Esophagus muscularis mucosa (tissue), 4 donors: ENCODE measurements at regions of chr9 and their contacts with region 1.

Region 1: DNA sequence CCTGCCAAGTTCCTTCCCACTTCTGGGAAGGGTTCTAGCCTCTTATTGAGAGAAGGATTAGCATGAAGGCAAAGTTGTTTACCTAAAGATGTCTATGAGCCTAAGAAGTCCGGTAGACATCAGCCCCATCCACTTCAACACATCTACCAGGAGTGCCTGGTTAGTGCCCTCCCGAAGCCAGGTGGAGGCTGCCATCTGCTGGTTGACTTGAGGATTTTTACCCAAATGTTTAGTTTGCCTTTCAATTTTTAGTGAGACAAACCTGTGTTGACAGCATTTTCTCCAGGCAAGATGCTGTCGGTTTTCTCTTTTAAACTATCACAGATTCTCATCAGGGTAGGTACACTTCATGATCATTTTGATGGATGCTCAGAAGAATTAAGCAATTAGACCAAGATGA is 83.6 kb upstream of the TNFSF8 start:
- DNase-seq: no peak
- H3K4me3 ChIP-seq: no peak overlapping the region
- H3K27ac ChIP-seq: no peak overlapping the region
- H3K4me1 ChIP-seq: peaks cover 0 to 52% (median 48%) of the 10 kb centered on the region in 4 donors
- H3K27me3 ChIP-seq: no peaks in the 10 kb centered on the region
- CTCF ChIP-seq: peak; percentile 81 to 84 (median 81)
- EP300 ChIP-seq: no peak
- POLR2A ChIP-seq: no peak

Region 2: GRCh38 chr9:114662081-114662989 is 351.7 kb before region 1 on chr9:
- intact Hi-C with region 1: loop called (anchors 5 kb)
- DNase-seq: no peak
- H3K4me3 ChIP-seq: no peak overlapping the region
- H3K27ac ChIP-seq: no peak overlapping the region
- H3K4me1 ChIP-seq: no peaks in the 10 kb centered on the region
- H3K27me3 ChIP-seq: no peaks in the 10 kb centered on the region
- CTCF ChIP-seq: peak; percentile 55 to 79 (median 64)
- EP300 ChIP-seq: no peak
- POLR2A ChIP-seq: no peak

Region 3: GRCh38 chr9:114738581-114739316 is 275.2 kb before region 1 on chr9:
- intact Hi-C with region 1: loop called (anchors 2 kb)
- DNase-seq: peak; percentile 95
- H3K4me3 ChIP-seq: no peak overlapping the region
- H3K27ac ChIP-seq: no peak overlapping the region
- H3K4me1 ChIP-seq: peaks cover 0 to 14% (median 9%) of the 10 kb centered on the region in 4 donors
- H3K27me3 ChIP-seq: no peaks in the 10 kb centered on the region
- CTCF ChIP-seq: peak; percentile 80 to 83 (median 82)
- EP300 ChIP-seq: no peak
- POLR2A ChIP-seq: no peak

Region 4: GRCh38 chr9:115117999-115118878 is 104.2 kb after region 1 on chr9 and contains the start of gene TNC:
- intact Hi-C with region 1: loop called (anchors 5 kb)
- DNase-seq: no peak
- H3K4me3 ChIP-seq: peak within 1 kb of the TSS; percentile 53 to 69 (median 59)
- H3K27ac ChIP-seq: peak within 1 kb of the TSS; percentile 90 to 92 (median 91)
- H3K4me1 ChIP-seq: peaks cover 12 to 61% (median 43%) of the 10 kb centered on the region in 4 donors
- H3K27me3 ChIP-seq: no peaks in the 10 kb centered on the region
- CTCF ChIP-seq: no peak
- EP300 ChIP-seq: no peak
- POLR2A ChIP-seq: peak; percentile 50
- total RNA-seq, gene TNC: 216 to 576 (median 478) TPM

Region 5: DNA sequence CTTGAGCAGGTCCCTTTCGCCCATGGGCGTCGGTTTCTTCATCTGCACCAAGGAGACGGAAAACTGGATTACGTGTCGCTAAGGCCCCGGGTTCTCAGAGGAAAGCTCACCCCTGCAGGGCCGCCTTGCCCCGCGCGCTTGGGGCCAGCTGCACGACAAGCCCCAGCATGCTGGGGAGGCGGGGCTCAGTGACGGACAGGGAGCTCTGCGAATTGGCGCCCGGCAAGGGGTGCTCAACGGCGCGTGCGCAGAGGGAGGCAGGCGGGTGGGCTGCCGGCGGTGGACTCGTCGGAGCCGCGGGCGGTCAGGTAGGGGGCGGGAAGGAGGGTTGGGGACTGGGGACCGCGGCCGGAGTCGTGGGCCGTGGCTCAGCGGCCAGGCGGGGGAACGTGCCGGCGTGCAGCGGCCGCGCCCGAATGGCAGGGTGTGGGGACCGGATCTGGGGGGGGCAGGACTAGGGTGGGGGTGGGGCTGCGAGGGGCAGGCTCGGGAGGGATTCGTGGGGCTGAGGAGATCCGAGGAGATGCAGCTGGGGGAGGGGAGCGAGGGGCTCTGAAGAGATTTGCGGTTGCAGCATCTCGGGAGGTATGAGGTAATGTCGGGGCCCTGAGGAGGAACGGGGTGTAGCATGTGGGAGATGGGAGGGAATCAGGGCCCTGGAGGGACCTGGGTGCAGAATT is 1673.2 kb after region 1 on chr9 and contains the start of gene TRIM32:
- intact Hi-C with region 1: loop called (anchors 10 kb)
- DNase-seq: peak; percentile 98
- H3K4me3 ChIP-seq: peak within 1 kb of the TSS; percentile 64 to 91 (median 78)
- H3K27ac ChIP-seq: peak within 1 kb of the TSS; percentile 78 to 85 (median 82)
- H3K4me1 ChIP-seq: peaks cover 29 to 57% (median 53%) of the 10 kb centered on the region in 4 donors
- H3K27me3 ChIP-seq: no peaks in the 10 kb centered on the region
- CTCF ChIP-seq: no peak
- EP300 ChIP-seq: no peak
- POLR2A ChIP-seq: no peak
- total RNA-seq, gene TRIM32: 12.9 to 19.2 (median 17.3) TPM